ENCODE measurements at regions of chr2 and their contacts with region 1.

Region 1: DNA sequence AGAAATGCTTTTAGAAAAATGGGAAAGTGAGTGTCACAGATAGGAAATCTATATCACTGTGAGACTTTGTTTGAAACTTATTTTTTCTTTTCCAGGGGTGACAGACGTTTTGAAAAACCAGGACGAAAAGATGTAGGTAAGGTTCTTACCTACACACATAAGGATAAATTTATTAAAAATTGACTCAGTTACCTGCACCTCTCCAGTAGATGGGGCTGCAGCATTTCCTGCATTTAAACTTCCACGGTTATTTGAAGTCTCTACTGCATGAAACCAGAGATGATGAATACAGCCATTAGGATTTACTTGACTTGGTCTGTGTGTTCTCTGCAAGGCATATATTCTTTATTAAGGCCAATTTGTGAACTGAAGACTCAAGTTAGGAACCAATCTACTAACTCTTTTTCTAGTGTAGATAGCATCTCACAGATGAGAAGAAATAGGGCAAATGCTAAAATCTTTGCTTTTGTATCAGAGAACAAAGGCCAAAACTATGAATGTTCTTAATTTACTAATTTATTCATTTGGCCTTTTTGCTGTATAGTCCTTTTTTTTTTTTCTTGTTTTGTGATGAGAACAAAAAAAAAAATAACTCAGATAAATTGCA is 15.0 kb downstream of the KCNJ13 start:
- DNase-seq: peak; percentile 54
- H3K4me3 Mint-ChIP-seq: no peak overlapping the region
- H3K27ac Mint-ChIP-seq: no peak overlapping the region
- H3K4me1 Mint-ChIP-seq: no peaks in the 10 kb centered on the region
- H3K27me3 Mint-ChIP-seq: no peaks in the 10 kb centered on the region
- CTCF ChIP-seq: peak; percentile 38

Region 2: DNA sequence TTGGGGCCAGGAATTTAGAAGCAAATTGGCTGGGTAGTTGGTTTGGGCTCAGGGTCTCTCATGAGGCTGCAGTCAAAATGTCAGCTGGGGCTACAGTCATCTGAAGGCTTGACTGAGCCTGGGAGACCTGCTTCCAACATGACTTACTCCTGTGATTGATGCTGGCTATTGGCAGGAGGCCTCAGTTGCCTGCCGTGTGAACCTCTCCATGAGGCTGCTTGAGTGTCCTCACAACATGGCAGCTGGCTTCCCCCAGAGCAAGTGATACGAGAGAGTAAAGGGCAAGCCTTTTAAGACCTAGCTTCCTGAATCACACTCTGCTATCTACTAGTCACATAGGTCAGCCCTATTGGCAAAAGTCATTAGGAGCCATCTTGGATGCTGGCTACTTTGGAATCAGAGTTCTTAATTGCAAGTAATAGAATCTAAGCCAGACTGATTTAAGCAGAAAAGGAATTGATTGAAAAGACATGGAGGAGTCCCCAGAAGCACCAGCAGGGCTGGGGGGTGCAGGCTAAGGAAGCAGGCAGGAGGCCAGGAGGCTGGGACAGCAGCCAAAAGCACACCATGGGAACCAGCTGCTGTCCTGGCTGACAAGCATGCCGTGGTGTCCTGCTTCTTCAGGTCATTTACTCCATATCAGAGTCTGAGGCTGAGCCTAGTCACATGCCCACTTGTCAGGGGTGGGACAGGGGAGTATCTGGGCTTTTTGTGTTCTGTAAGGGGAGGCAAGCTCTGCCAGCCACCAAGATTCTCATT is 72.1 kb before region 1 on chr2:
- CTCF ChIA-PET with region 1: no interaction called
- POLR2A ChIA-PET with region 1: no interaction called
- intact Hi-C with region 1: no loop called
- DNase-seq: peak; percentile 42
- H3K4me3 Mint-ChIP-seq: no peak overlapping the region
- H3K27ac Mint-ChIP-seq: no peak overlapping the region
- H3K4me1 Mint-ChIP-seq: peaks cover 9% of the 10 kb centered on the region
- H3K27me3 Mint-ChIP-seq: peaks cover 2% of the 10 kb centered on the region
- CTCF ChIP-seq: no peak

Region 3: GRCh38 chr2:232744963-232745362 is 16.4 kb before region 1 on chr2:
- CTCF ChIA-PET with region 1: interaction called, 3 read pairs
- POLR2A ChIA-PET with region 1: interaction called, 13 read pairs
- intact Hi-C with region 1: no loop called
- DNase-seq: no peak
- H3K4me3 Mint-ChIP-seq: no peak overlapping the region
- H3K27ac Mint-ChIP-seq: no peak overlapping the region
- H3K4me1 Mint-ChIP-seq: peaks cover 6% of the 10 kb centered on the region
- H3K27me3 Mint-ChIP-seq: no peaks in the 10 kb centered on the region
- CTCF ChIP-seq: no peak

Region 4: GRCh38 chr2:232927793-232928550 is 166.6 kb after region 1 on chr2:
- CTCF ChIA-PET with region 1: no interaction called
- POLR2A ChIA-PET with region 1: no interaction called
- intact Hi-C with region 1: no loop called
- DNase-seq: no peak
- H3K4me3 Mint-ChIP-seq: peak overlapping the region; percentile 58
- H3K27ac Mint-ChIP-seq: no peak overlapping the region
- H3K4me1 Mint-ChIP-seq: peaks cover 7% of the 10 kb centered on the region
- H3K27me3 Mint-ChIP-seq: no peaks in the 10 kb centered on the region
- CTCF ChIP-seq: no peak

Measured in MCF 10A (cell line).